CD4-positive, alpha-beta memory T cell (primary cell): ENCODE measurements at regions of chr3 and their contacts with region 1.

Region 1: DNA sequence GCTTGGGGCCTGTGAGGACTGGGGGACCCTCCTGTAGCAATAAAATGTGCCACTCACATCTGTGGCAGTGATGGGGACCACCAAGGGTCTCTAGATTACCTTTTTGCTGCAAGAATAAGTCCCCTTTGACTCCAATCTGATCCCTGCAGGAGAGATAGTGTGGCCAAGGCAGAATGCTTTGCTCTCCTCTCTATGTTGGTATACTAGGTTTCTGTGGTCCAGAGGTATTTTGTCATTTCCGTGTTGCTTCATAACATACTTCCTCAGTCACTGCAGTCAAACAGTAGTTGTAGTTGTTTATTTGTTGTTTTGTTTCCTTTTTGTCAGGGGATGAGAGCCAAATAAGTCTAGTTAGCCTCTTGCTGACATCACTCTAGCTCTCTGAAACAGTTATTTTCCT is 13.1 kb upstream of the NAALADL2 start:
- DNase-seq: no peak
- H3K4me3 ChIP-seq: no peak overlapping the region
- H3K4me3 Mint-ChIP-seq: no peak overlapping the region
- H3K27ac ChIP-seq: no peak overlapping the region
- H3K27ac Mint-ChIP-seq: no peak overlapping the region
- H3K4me1 ChIP-seq: no peaks in the 10 kb centered on the region
- H3K4me1 Mint-ChIP-seq: no peaks in the 10 kb centered on the region
- H3K27me3 ChIP-seq: no peaks in the 10 kb centered on the region
- H3K27me3 Mint-ChIP-seq: no peaks in the 10 kb centered on the region

Region 2: GRCh38 chr3:174413057-174413912 is 432.8 kb before region 1 on chr3:
- CTCF ChIA-PET with region 1: no interaction called
- POLR2A ChIA-PET with region 1: no interaction called
- intact Hi-C with region 1: loop called (anchors 5 kb)
- DNase-seq: no peak
- H3K4me3 ChIP-seq: no peak overlapping the region
- H3K4me3 Mint-ChIP-seq: no peak overlapping the region
- H3K27ac ChIP-seq: no peak overlapping the region
- H3K27ac Mint-ChIP-seq: no peak overlapping the region
- H3K4me1 ChIP-seq: no peaks in the 10 kb centered on the region
- H3K4me1 Mint-ChIP-seq: no peaks in the 10 kb centered on the region
- H3K27me3 ChIP-seq: no peaks in the 10 kb centered on the region
- H3K27me3 Mint-ChIP-seq: no peaks in the 10 kb centered on the region